A673 (cell line): ENCODE measurements at regions of chr11 and their contacts with region 1.

Region 1: GRCh38 chr11:118928108-118928870 is 2.6 kb upstream of the BCL9L start:
- DNase-seq: peak; percentile 97
- H3K4me3 ChIP-seq: peak overlapping the region; percentile 70
- H3K27ac ChIP-seq: peak overlapping the region; percentile 60
- H3K4me1 ChIP-seq: peaks cover 33% of the 10 kb centered on the region
- H3K27me3 ChIP-seq: no peaks in the 10 kb centered on the region
- CTCF ChIP-seq: peak; percentile 99

Region 2: DNA sequence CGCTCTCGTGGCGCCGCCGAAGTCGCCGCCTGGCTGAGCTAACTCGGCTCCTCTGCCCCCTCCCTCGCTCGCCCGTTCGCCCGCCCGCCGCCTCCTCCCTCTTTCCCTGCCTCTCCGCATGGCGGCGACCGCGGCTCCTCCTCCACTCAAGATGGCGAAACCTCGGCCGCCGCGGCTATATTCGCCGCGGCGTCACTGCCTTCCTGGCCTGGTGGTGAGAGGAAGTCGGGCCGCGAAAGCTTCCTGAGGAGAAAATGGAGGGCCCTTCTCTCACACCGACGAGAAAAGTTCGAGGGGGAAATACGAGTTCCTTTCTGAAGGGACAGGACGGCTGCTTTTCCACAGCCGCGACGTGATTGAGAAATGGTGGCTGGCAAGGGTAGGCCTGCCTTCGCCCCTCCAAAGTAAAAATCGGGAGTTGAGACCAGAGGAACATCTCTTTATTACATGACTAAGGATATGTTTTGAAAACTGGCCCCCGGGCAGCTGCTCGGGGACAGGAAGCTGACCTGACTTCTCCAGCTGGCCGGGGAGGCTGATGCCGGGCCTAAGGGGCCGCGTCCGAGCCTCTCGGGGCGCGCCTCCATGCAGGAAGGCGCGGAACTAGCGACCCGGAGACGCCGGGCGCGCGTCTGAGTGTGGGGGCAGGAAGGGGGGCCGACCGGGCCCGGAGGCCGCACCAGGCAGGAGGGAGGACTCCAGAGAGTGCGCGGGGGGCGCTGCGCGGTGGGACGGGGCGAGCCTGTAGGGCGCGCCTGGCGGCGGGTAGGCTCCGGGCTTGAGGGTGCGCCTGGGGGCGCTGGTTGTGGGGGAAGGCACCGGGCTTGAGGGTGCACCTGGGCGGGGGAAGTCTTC is 137.0 kb before region 1 on chr11 and contains the start of gene DDX6:
- CTCF ChIA-PET with region 1: interaction called, 7 read pairs
- POLR2A ChIA-PET with region 1: no interaction called
- intact Hi-C with region 1: loop called (anchors 2 kb)
- DNase-seq: peak; percentile 92
- H3K4me3 ChIP-seq: peak within 1 kb of the TSS; percentile 94
- H3K27ac ChIP-seq: peak within 1 kb of the TSS; percentile 98
- H3K4me1 ChIP-seq: peaks cover 38% of the 10 kb centered on the region
- H3K27me3 ChIP-seq: no peaks in the 10 kb centered on the region
- CTCF ChIP-seq: peak; percentile 44
- total RNA-seq, gene DDX6: 193 and 229 TPM in 2 replicates

Region 3: GRCh38 chr11:118961189-118961588 is 32.9 kb after region 1 on chr11:
- CTCF ChIA-PET with region 1: no interaction called
- POLR2A ChIA-PET with region 1: no interaction called
- intact Hi-C with region 1: no loop called
- DNase-seq: no peak
- H3K4me3 ChIP-seq: no peak overlapping the region
- H3K27ac ChIP-seq: no peak overlapping the region
- H3K4me1 ChIP-seq: no peaks in the 10 kb centered on the region
- H3K27me3 ChIP-seq: no peaks in the 10 kb centered on the region
- CTCF ChIP-seq: no peak